ENCODE measurements at regions of chr4 and their contacts with region 1.

Region 1: DNA sequence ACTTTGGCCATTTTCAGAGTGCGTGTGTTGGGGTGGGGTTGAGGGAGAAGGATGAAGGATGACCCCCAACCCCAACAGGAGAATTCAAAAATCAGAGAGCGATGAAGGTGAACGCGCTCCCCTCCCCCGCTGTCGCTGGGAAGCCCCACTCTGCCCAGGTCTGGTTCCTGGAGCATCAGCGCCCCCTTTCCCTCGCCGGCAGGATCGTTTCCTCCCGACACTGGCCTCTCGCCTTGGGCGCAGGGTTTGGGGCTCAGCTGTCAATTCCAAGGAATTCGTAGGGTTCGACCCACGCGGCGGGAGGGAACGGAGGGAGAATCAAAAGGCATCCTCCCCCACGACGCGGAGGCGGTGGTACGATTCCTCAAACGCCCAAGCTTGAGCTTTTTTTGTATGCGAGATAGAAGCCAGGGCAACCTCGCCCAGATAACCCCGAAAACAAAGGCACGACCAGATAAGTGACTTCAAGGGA is 1.0 kb upstream of the PDGFRA start:
- ATAC-seq: peak; percentile 37 to 84 (median 81)
- H3K4me3 ChIP-seq: peak overlapping the region; percentile 25 to 45 (median 34)
- H3K27ac ChIP-seq: no peak overlapping the region
- H3K4me1 ChIP-seq: peaks cover 5 to 15% of the 10 kb centered on the region in 2 donors

Region 2: DNA sequence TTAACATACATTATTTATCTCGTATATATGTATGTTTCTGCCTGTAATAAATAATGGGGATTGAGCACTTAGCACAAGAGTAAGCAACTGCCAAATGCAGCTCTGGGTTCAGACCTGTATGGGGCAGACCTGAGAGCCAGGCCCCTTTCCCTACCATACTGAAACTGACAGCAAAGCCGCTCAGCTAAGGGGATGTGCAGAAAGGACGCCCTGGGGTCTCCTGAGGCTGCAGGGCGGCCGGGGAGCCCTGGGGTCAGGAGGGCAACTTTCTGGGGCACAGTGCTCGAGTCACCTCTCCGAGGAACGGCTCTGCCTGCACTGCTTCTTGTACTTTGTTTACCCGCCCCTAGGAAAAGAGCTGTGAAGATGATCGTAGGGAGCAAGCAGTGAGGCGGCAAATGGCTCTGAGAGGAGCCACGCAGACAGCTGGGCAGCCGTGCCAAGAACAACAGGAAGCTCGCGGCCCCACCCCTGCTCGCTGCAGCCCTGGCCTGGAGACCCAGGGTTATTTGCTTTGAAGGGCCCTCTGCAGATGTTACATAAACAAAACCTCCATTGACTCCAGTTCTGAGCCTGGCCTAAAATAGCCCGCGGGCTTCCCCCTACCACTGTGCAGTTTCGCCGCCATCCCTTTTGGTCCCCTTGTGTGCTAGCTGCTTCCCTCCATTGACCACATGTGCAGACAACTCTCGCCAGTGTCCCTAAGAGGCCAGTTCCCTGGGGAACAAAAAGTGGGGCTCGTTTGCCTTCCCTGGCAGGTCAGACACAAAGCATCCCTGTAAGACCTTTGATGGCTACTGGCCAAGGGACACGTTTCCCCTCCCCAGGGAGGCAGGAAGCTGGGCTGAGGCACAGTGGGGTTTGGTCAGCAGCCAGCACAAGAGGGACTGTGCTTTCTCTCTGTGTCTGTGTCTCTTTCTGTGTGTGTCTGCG is 525.5 kb before region 1 on chr4:
- in situ Hi-C with region 1: loop called in 2 of 9 experiments (anchors 5 to 25 kb)
- ATAC-seq: peak; percentile 80 to 97 (median 88)
- H3K4me3 ChIP-seq: no peak overlapping the region
- H3K27ac ChIP-seq: peak overlapping the region in 1 of 2 donors; percentile 50
- H3K4me1 ChIP-seq: peaks cover 5 to 12% of the 10 kb centered on the region in 2 donors

Region 3: GRCh38 chr4:53908661-53909078 is 319.4 kb before region 1 on chr4:
- in situ Hi-C with region 1: loop called in 6 of 9 experiments (anchors 5 to 25 kb)
- ATAC-seq: peak; percentile 36 to 87 (median 73)
- H3K4me3 ChIP-seq: no peak overlapping the region
- H3K27ac ChIP-seq: no peak overlapping the region
- H3K4me1 ChIP-seq: peaks cover 0 to 8% of the 10 kb centered on the region in 2 donors

Region 4: DNA sequence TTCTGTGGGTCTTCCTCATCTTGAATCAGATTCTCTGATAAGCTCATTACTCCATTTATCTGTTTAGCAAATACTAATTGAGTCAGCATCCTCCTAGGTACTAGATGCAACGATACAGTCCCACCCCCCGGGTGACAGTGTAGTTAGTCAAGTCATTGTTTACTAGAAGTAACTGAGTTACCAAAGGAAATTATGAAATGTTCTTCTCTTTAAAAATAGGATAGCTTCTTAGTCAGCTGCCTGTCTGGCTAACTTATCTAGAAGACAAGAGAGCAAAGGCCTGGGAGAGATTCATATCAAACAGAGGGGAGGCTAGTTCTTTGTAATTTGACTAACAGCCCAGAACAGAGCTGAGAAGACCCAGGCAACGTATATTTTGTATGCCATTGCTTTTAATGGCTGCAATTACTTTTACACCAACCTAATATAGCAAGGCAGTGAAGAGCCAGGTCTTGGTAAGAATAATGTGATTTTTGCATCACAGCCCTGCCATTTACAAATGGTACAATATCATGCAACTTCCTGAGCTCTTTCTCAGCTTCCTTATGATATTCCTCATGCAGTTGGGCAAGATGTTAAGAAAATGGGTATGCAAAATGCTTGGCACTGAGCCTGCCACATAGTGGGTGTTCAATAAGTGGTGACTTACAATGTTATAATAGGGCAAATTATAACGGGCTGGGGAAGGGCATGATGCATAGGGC is 313.6 kb before region 1 on chr4:
- in situ Hi-C with region 1: loop called in 6 of 9 experiments (anchors 5 to 25 kb)
- ATAC-seq: no peak
- H3K4me3 ChIP-seq: no peak overlapping the region
- H3K27ac ChIP-seq: no peak overlapping the region
- H3K4me1 ChIP-seq: no peaks in the 10 kb centered on the region

Region 5: DNA sequence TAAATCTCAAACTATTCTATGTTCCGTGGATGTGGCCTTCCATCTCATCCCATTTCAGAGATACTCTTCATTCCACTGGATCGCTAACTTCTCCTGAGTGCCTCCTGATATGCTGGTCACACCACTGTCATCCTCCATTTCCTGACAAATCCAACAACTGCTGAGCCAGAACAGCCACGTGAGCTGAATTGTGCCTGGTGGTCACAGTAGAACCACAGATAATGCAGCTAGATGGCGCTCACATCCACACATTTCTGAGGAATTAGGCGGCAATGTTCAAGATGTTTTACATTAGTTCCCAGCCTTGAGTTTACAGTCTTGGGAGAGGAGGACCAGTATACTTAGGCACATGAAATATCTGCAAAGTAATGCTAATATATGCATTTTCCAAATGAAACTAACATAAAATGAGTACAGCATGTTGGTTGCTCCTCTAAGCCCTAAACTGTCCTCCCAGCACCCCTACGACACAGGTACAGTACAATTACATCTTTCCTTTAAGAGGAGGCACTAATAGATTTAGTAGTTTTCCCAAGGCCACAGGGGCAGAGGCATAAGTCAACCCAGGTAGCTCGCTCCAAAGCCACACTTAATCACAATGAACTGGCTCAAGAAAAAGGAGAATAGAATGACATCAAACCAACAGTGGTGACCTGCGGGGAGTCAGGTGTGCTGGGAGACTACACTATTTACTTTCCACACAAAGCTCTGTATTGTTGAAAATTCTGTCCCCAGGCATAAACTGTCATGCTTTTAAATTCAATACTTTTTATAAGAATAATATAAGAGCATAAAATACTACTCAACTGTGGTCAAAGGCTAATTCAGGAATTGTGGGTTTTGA is 297.9 kb before region 1 on chr4:
- in situ Hi-C with region 1: loop called in 2 of 9 experiments (anchors 10 to 25 kb)
- ATAC-seq: peak; percentile 87 to 98 (median 92)
- H3K4me3 ChIP-seq: no peak overlapping the region
- H3K27ac ChIP-seq: no peak overlapping the region
- H3K4me1 ChIP-seq: no peaks in the 10 kb centered on the region

Measured in motor neuron (in vitro differentiated cells).